ENCODE measurements at regions of chr5 and their contacts with region 1.

Region 1: DNA sequence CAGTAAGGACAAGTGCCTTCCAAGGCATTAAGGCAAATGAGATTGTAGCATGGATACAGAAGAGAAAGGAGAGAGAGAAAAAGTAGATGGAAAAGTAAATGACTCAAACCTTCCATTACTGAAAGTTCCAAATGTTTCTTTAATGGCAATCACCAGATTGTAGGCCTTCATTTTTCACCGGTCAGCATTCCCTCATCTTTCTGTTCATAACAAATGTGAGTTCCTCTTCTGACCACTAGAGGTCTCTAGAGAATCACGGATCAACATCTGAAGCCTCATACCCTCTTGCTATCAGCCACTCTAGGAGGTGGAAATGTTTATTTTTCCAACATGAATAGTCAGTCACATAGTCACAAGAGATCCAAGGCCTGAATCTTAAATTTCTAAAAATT is 73.6 kb upstream of the RPS23 start:
- DNase-seq: peak in 1 of 2 donors; percentile 35
- ATAC-seq: peak; percentile 52 to 82 (median 70)
- H3K4me3 ChIP-seq: no peak overlapping the region
- H3K27ac ChIP-seq: peak overlapping the region in 6 of 10 donors; percentile 27 to 76 (median 51)
- H3K4me1 ChIP-seq: peaks cover 2 to 60% (median 31%) of the 10 kb centered on the region in 9 donors
- H3K27me3 ChIP-seq: no peaks in the 10 kb centered on the region
- CTCF ChIP-seq: peak; percentile 63 to 86 (median 79)

Region 2: DNA sequence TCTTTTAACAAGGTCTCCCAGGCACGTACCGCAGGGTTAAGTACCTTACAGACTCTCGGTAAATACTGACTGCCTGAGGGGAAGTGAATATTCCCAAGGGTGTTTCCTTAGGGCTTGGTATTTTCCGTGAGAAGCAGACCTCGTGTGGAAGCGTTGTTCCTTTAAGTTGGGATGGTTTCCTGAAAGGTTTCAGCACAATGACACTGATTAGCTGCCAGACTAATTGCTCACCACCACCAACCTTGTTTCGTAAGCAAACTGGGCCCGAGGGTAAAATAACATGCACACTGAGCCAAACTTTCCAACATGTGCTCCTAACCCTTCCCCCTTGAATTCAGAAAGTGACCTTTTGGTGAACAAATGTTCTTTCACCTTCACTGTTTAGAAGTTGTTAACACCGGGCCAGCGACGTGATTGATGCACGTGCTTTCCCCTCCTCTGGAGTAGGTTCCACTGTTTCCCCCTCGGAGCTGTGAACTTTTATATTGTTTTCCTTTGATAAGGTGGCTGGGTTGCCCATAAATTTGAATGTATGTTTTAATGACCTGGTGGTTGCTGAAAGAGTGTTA is 54.5 kb after region 1 on chr5:
- intact Hi-C with region 1: loop called in 1 of 10 experiments (anchors 10 kb)
- DNase-seq: peak in 1 of 2 donors; percentile 23
- ATAC-seq: peak; percentile 23 to 90 (median 77)
- H3K4me3 ChIP-seq: no peak overlapping the region
- H3K27ac ChIP-seq: peak overlapping the region in 5 of 10 donors; percentile 16 to 72 (median 45)
- H3K4me1 ChIP-seq: peaks cover 0 to 15% (median 9%) of the 10 kb centered on the region in 9 donors
- H3K27me3 ChIP-seq: no peaks in the 10 kb centered on the region
- CTCF ChIP-seq: no peak

Region 3: DNA sequence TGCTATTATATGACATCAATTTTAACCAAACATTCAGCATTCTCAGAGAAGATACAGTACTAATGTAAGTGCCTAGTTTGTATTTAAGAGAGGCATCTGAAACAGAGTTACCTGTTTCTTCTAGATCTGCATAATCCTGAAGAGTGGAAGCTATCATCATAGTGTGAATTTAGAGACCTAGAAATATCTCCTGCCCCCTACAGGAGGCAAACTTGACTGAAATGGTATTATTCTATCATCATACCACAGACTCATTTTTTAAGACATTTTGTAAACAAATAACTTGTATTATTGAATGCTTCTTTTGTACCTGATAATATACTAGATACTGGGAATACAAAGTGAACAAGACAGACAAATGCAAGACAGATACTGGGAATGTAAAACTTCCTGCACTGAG is 143.2 kb after region 1 on chr5:
- intact Hi-C with region 1: loop called in 2 of 10 experiments (anchors 10 kb)
- DNase-seq: no peak
- ATAC-seq: no peak
- H3K4me3 ChIP-seq: no peak overlapping the region
- H3K27ac ChIP-seq: no peak overlapping the region
- H3K4me1 ChIP-seq: no peaks in the 10 kb centered on the region
- H3K27me3 ChIP-seq: no peaks in the 10 kb centered on the region
- CTCF ChIP-seq: peak in 6 of 9 donors; percentile 16 to 40 (median 24)

Region 4: GRCh38 chr5:82641331-82642003 is 289.7 kb after region 1 on chr5:
- intact Hi-C with region 1: loop called in 6 of 10 experiments (anchors 5 kb)
- DNase-seq: peak in 1 of 2 donors; percentile 79
- ATAC-seq: peak; percentile 85 to 98 (median 94)
- H3K4me3 ChIP-seq: no peak overlapping the region
- H3K27ac ChIP-seq: peak overlapping the region in 4 of 10 donors; percentile 1 to 25 (median 20)
- H3K4me1 ChIP-seq: peaks cover 0 to 24% (median 9%) of the 10 kb centered on the region in 9 donors
- H3K27me3 ChIP-seq: no peaks in the 10 kb centered on the region
- CTCF ChIP-seq: peak; percentile 44 to 80 (median 71)

Region 5: GRCh38 chr5:83076742-83077661 is 725.3 kb after region 1 on chr5 and contains the starts of genes TMEM167A and XRCC4:
- intact Hi-C with region 1: loop called in 1 of 10 experiments (anchors 10 kb)
- DNase-seq: peak; percentile 94 to 97
- ATAC-seq: peak; percentile 100
- H3K4me3 ChIP-seq: peak within 1 kb of the TSS; percentile 44 to 90 (median 78)
- H3K27ac ChIP-seq: peak within 1 kb of the TSS; percentile 11 to 95 (median 85)
- H3K4me1 ChIP-seq: peaks cover 0 to 56% (median 45%) of the 10 kb centered on the region in 9 donors
- H3K27me3 ChIP-seq: no peaks in the 10 kb centered on the region
- CTCF ChIP-seq: no peak
- total RNA-seq, gene TMEM167A: 35.5 to 53.5 (median 44.5) TPM
- total RNA-seq, gene XRCC4: 4.0 to 10.7 (median 6.8) TPM

Region 6: GRCh38 chr5:83473346-83474163 is 1121.8 kb after region 1 on chr5:
- intact Hi-C with region 1: loop called in 6 of 10 experiments (anchors 5 to 10 kb)
- DNase-seq: peak; percentile 84 to 90
- ATAC-seq: peak; percentile 81 to 92 (median 86)
- H3K4me3 ChIP-seq: peak overlapping the region; percentile 33 to 68 (median 58)
- H3K27ac ChIP-seq: peak overlapping the region; percentile 23 to 86 (median 77)
- H3K4me1 ChIP-seq: peaks cover 0 to 58% (median 36%) of the 10 kb centered on the region in 9 donors
- H3K27me3 ChIP-seq: peaks cover 0 to 84% (median 58%) of the 10 kb centered on the region in 7 donors
- CTCF ChIP-seq: peak; percentile 58 to 94 (median 84)

Measured in heart right ventricle (tissue), 16 donors.